Adrenal gland (tissue), 19 donors: ENCODE measurements at regions of chr10 and their contacts with region 1.

Region 1: GRCh38 chr10:92290837-92291615 is at the starts of genes CPEB3 and MARCHF5:
- DNase-seq: peak; percentile 96 to 99 (median 98)
- H3K4me3 ChIP-seq: peak within 1 kb of the TSS; percentile 78 to 93 (median 85)
- H3K27ac ChIP-seq: peak within 1 kb of the TSS; percentile 94 to 99 (median 97)
- H3K4me1 ChIP-seq: peaks cover 9 to 19% of the 10 kb centered on the region in 2 donors
- H3K27me3 ChIP-seq: no peaks in the 10 kb centered on the region
- CTCF ChIP-seq: peak; percentile 74 to 97 (median 92)
- POLR2A ChIP-seq: peak; percentile 85 to 97
- total RNA-seq, gene CPEB3: 4.1 to 13.4 (median 6.2) TPM
- total RNA-seq, gene MARCHF5: 12.0 to 61.9 (median 21.6) TPM

Region 2: DNA sequence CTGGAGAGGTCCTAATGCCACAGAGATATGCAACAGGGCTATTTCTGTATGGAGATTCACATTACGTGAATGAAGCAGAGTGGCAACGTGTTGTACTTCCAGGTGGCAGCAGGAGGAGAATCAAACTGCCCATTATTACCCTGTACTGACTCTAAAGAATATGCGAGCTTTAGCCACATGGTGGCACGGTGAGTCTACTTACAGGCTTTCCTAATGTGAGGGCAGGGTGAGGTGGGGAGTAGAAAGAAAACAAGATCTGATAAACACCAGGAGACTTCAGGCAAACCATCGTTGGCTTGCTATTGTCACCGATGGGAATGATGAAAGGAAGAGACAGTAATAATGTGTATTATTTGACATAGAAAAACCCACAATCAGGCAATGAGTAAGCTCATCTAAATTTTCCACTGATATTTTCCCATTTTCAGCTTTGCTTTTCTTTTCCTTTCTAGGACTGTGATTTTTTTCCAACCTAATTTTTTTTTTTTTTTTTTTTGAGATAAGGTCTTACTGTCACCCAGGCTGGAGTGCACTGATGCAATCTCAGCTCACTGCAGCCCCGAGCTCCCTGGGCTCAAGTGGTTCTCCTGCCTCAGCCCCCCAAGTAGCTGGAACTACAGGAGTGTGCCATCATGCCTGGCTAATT is 203.2 kb before region 1 on chr10:
- intact Hi-C with region 1: loop called in 1 of 2 experiments (anchors 10 kb)
- DNase-seq: peak; percentile 78 to 94 (median 84)
- H3K4me3 ChIP-seq: peak overlapping the region in 1 of 4 donors; percentile 35
- H3K27ac ChIP-seq: peak overlapping the region in 4 of 5 donors; percentile 33 to 72 (median 44)
- H3K4me1 ChIP-seq: peaks cover 0 to 18% of the 10 kb centered on the region in 2 donors
- H3K27me3 ChIP-seq: no peaks in the 10 kb centered on the region
- CTCF ChIP-seq: peak; percentile 78 to 99 (median 96)
- POLR2A ChIP-seq: no peak

Region 3: DNA sequence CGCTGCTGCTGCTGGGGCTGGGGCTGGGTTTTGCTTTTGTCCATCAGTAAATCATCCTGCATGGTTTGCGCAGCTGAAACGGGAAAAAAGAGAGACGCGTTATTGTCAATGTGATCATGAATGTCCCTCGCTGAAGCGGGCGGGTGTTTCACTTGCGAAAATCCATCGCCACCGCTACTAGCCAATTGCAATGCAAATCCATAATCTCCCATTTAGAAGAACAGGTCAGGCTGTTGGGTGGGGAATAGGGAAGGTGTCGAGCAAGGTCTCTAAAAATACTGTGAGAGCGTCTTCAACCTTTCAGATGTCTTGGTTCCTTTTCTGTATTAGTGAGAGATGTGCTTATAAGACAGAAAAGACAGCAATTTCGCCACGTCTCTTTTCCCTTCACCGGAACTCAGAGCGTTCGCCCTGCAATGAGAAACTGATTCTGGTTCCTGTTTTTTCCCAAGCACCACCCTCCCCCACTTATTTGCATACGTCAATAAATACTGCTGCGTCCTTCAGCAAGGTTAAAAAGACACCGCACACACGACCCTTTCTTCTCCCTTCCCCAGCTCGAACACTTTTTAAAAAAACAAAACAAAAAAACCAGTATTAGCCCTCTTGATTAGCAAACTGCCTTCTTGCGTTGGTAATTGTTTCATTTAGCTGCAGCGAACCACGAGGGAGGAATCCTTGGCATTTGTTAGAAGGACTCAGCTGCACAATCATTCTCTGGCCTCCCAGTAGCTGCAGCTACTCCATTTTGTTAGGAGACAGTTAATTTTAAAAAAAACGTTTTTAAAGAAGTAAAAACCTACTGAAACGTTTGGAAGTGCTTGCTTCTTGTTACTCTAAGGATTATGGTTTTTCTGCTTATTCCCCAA is 50.5 kb before region 1 on chr10:
- intact Hi-C with region 1: loop called in 1 of 2 experiments (anchors 5 kb)
- DNase-seq: peak; percentile 73 to 90 (median 81)
- H3K4me3 ChIP-seq: peak overlapping the region in 3 of 4 donors; percentile 66 to 91 (median 71)
- H3K27ac ChIP-seq: peak overlapping the region; percentile 66 to 95 (median 89)
- H3K4me1 ChIP-seq: peaks cover 27 to 62% of the 10 kb centered on the region in 2 donors
- H3K27me3 ChIP-seq: no peaks in the 10 kb centered on the region
- CTCF ChIP-seq: no peak
- POLR2A ChIP-seq: peak; percentile 57 to 94